BJ (cell line): ENCODE measurements at regions of chr5 and their contacts with region 1.

Region 1: GRCh38 chr5:73498057-73499008 is at the start of gene BTF3:
- DNase-seq: peak; percentile 87
- H3K4me3 ChIP-seq: peak within 1 kb of the TSS; percentile 100
- H3K27me3 ChIP-seq: no peaks in the 10 kb centered on the region
- CTCF ChIP-seq: 0 out of 2 replicates have a peak, but pooled peaks have one; percentile 2
- polyA plus RNA-seq, gene BTF3: 478 and 758 TPM in 2 replicates

Region 2: DNA sequence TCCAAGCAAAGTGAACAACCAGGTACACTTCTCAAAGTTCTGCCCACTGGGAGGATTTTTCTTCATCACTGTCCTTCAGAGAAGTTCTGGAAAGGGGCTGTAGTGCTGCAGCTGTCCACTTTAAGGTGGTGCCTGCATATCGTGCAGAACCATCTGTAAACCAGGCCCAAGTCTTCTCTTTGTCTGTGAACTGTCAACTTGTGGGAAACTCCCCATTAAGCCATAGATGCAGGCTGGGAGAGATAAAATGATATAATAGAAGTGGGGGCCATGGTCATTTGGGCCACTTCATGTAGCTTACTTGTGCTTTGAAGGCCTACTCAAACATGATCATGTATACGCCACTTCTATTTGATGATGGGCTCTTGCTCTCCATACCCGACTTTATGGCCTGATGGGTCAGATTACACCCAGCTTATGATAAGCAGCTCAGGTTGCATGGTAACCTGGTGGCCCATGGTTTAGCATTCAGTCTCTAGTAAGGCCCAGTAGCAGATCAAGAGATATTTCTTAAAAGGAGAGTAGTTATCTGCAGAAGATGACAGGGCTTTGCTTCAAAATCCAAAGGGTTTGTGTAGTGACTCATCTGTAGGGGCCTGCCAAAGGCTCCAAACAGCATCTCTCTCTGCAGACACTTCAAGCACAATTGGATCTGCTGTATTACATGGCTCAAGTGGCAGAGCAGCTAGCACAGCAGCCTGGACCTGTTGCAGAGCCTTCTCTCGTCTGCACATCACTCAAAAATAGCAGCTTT is 15.8 kb before region 1 on chr5:
- CTCF ChIA-PET with region 1: interaction called, 14 read pairs
- POLR2A ChIA-PET with region 1: no interaction called
- DNase-seq: no peak
- H3K4me3 ChIP-seq: no peak overlapping the region
- H3K27me3 ChIP-seq: peaks cover 2% of the 10 kb centered on the region; the same call in 1 of the 2 replicates
- CTCF ChIP-seq: no peak

Region 3: GRCh38 chr5:74336297-74336696 is 838.0 kb after region 1 on chr5:
- CTCF ChIA-PET with region 1: no interaction called
- POLR2A ChIA-PET with region 1: no interaction called
- DNase-seq: no peak
- H3K4me3 ChIP-seq: no peak overlapping the region
- H3K27me3 ChIP-seq: peaks cover 4% of the 10 kb centered on the region
- CTCF ChIP-seq: no peak